ENCODE measurements at regions of chr1 and their contacts with region 1.

Region 1: GRCh38 chr1:46527474-46528296 is 23.8 kb downstream of the KNCN start:
- DNase-seq: peak; percentile 47 to 96
- H3K4me3 ChIP-seq: no peak overlapping the region
- H3K27ac ChIP-seq: no peak overlapping the region
- H3K4me1 ChIP-seq: peaks cover 8 to 31% (median 18%) of the 10 kb centered on the region in 4 experiments
- H3K27me3 ChIP-seq: peaks cover 22 to 88% (median 72%) of the 10 kb centered on the region in 4 experiments
- CTCF ChIP-seq: peak in 2 of 3 experiments; percentile 97 to 99; a peak in 3 of 4 replicates
- EP300 ChIP-seq: no peak
- POLR2A ChIP-seq: no peak
- RAD21 ChIP-seq: peak; percentile 98 to 100

Region 2: DNA sequence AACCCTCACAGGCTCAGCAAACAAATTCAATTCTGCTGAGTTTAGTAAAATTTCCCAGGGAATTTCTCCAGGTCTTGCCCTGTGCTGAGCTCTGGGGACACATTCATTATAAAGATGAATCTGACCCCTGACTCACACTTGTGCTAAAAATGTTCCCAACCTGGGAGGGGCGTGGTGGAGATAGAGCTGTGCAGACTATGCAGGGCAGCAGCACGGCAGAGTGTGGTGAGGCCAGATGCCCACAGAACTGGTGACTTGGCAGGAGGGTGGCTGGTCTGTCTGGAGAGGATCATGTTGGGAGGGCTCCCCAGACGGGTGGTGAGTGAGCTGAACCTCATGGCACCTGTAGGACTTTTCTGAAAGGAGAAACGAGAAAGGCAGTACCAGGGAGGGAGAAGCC is 102.0 kb before region 1 on chr1:
- CTCF ChIA-PET with region 1: interaction called, 17 read pairs
- POLR2A ChIA-PET with region 1: no interaction called
- DNase-seq: no peak
- H3K4me3 ChIP-seq: no peak overlapping the region
- H3K27ac ChIP-seq: no peak overlapping the region
- H3K4me1 ChIP-seq: no peaks in the 10 kb centered on the region
- H3K27me3 ChIP-seq: no peaks in the 10 kb centered on the region; a peak in 1 of 7 replicates
- CTCF ChIP-seq: no peak
- EP300 ChIP-seq: no peak
- POLR2A ChIP-seq: no peak
- RAD21 ChIP-seq: no peak

Region 3: DNA sequence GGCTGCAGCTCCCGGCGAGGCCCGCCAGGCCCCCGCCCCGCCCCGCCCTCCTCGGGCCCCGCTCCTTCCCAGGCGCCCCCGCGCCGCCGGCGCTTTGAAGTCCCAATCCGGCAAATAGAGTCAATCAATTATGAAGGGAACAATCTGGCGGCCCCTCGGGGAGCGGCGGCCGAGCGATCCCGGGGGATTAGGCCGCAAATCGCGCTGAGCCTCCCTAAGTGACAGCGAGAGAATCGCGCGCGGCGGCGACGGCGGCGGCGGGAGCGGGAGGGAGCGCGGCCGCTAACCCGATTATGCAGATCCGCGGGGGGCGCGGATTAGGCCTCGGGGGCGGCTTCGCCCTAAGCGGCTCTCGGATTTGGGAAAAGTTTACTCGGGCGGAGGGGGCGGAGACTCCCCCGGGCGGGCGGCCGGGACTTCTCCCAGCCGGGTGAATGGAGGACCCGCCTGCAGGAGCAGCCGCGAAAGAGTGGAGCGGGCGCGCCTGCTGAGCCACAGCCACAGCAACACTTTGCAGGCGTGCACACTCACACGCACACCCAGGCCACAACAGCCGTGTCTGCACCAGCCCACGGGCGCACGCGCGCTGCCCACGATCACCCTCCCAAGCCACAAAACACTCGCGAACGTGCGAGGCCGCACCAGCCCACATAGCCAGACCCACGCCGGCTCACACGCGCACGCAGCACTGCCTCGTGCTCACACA is 61.1 kb before region 1 on chr1:
- CTCF ChIA-PET with region 1: interaction called, 1,068 read pairs
- POLR2A ChIA-PET with region 1: no interaction called
- DNase-seq: peak in 1 of 2 experiments; percentile 82
- H3K4me3 ChIP-seq: peak overlapping the region; percentile 40 to 69 (median 52)
- H3K27ac ChIP-seq: no peak overlapping the region
- H3K4me1 ChIP-seq: peaks cover 0 to 28% (median 21%) of the 10 kb centered on the region in 4 experiments; a peak in 6 of 7 replicates
- H3K27me3 ChIP-seq: peaks cover 17 to 75% (median 53%) of the 10 kb centered on the region in 4 experiments
- CTCF ChIP-seq: no peak
- EP300 ChIP-seq: no peak
- POLR2A ChIP-seq: no peak
- RAD21 ChIP-seq: no peak

Region 4: DNA sequence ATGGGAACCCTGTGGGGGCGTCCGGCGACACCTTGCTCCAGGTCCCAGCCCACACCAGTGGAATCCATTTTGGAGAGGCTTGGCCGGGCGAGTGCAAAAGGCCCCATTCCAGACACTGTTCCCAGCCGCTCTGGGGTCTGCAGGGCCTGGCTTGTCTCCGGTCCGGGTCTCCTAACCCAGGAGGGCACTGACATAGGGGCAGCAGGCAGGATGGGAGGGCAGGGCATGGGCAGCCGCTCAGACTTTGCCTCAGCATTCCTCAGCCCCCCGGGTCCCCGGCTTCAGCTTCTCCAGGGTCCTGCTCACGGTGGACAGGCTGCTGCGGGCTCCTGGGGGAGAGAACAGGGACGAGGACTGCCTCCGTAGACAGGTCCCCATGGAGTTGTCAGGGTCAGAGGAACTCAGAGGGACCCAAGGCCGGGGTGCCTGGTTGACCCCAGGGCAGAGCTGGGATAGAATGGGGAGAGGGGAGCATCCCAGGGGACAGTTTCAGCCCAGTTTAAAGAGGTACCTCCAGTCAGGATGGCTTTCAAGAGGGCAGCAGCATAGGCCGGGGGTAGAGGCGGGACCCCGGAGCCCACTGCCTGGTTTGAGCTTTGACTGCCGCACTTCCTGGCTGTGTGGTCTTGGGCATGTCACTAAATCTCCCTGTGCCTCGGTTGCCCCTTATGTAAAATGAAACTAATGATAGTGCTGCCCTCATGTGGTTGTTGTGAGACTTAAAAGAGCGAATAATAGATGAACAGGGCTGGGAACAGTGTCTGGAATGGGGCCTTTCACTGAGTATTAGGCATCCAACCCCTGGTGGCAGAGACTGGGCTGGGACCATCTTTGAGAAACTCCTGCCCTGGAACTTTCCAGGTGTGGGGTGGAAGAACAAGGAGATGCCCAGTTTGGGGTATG is 20.0 kb after region 1 on chr1:
- CTCF ChIA-PET with region 1: interaction called, 322 read pairs
- POLR2A ChIA-PET with region 1: interaction called, 7 read pairs
- DNase-seq: no peak
- H3K4me3 ChIP-seq: no peak overlapping the region
- H3K27ac ChIP-seq: no peak overlapping the region
- H3K4me1 ChIP-seq: peaks cover 0 to 30% (median 19%) of the 10 kb centered on the region in 4 experiments; a peak in 6 of 7 replicates
- H3K27me3 ChIP-seq: peaks cover 27 to 44% (median 41%) of the 10 kb centered on the region in 4 experiments
- CTCF ChIP-seq: peak in 2 of 3 experiments; percentile 65 to 66; a peak in 3 of 4 replicates
- EP300 ChIP-seq: no peak
- POLR2A ChIP-seq: no peak
- RAD21 ChIP-seq: peak; percentile 60 to 70

Region 5: GRCh38 chr1:46603858-46604549 is 76.3 kb after region 1 on chr1 and contains the start of gene MKNK1:
- CTCF ChIA-PET with region 1: interaction called, 48 read pairs
- POLR2A ChIA-PET with region 1: no interaction called
- DNase-seq: peak; percentile 97 to 100
- H3K4me3 ChIP-seq: peak within 1 kb of the TSS; percentile 70 to 87 (median 79)
- H3K27ac ChIP-seq: no peak within 1 kb of the TSS
- H3K4me1 ChIP-seq: peaks cover 0 to 8% (median 3%) of the 10 kb centered on the region in 4 experiments; a peak in 4 of 7 replicates
- H3K27me3 ChIP-seq: 0 out of 7 replicates have a peak, but pooled peaks cover 0 to 2% (median 0%) of the 10 kb centered on the region in 4 experiments
- CTCF ChIP-seq: peak; percentile 60 to 74 (median 61)
- EP300 ChIP-seq: no peak
- POLR2A ChIP-seq: peak in 1 of 2 experiments; percentile 47; a peak in 1 of 3 replicates
- RAD21 ChIP-seq: peak; percentile 65 to 69
- total RNA-seq, gene MKNK1: 21.5 and 23.9 TPM in 2 replicates